GM23248 (cell line): ENCODE measurements at regions of chr19 and their contacts with region 1.

Region 1: DNA sequence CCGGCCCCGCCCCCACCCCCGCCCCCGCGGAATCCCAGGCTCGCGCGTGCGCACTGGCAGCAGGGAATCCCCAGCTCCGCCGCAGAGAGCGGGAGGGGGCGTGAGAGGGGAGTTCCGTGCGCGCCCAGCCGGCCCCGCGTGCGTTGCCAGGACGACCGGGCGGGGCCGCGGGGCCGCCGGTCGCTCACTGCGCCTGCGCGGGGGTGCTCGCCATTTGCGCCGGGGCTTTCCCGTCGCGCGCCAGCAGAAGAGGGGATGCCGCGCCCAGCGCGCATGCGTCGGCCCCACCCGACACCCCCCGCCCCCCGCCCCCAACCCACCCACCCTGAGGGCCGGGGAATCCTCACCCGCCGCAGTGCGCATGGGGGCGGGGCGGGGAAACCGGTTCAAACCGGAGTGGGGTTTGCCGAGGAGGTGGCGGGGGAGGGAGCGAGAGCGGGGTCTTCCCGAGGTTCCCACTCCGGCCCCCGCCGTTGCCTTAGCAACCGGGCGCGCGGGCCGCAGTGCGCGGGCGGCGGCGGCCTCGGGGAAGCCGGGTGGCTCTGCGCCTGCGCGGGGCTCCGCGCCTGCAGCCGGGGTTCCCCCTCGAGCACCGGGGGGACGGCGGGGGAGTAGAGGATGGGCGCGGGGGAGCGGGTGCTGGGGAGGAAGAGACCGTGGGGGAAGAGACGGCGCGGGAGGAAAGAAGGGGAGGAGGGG is 15.1 kb downstream of the CCDC124 start:
- DNase-seq: peak; percentile 98
- H3K4me3 ChIP-seq: peak overlapping the region; percentile 67
- H3K27ac ChIP-seq: no peak overlapping the region
- H3K4me1 ChIP-seq: peaks cover 3% of the 10 kb centered on the region; the same call in 1 of the 2 replicates
- H3K27me3 ChIP-seq: peaks cover 43% of the 10 kb centered on the region

Region 2: DNA sequence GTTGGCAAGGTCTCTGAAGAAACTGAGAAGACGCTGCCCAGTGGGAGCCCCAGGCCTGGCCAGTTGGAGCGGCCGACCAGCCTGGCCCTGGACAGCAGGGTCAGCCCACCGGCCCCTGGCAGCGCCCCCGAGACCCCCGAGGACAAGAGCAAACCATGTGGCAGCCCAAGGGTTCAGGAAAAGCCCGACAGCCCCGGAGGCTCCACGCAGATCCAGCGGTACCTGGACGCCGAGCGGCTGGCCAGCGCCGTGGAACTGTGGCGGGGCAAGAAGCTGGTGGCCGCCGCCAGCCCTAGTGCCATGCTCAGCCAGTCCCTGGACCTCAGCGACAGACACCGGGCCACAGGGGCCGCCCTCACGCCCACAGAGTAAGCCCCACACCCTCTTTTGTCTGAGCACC is 752.9 kb before region 1 on chr19:
- in situ Hi-C with region 1: no loop called
- DNase-seq: no peak
- H3K4me3 ChIP-seq: no peak overlapping the region
- H3K27ac ChIP-seq: no peak overlapping the region
- H3K4me1 ChIP-seq: no peaks in the 10 kb centered on the region
- H3K27me3 ChIP-seq: no peaks in the 10 kb centered on the region

Region 3: GRCh38 chr19:17996826-17997316 is 48.9 kb after region 1 on chr19:
- in situ Hi-C with region 1: loop called (anchors 10 kb)
- DNase-seq: peak; percentile 82
- H3K4me3 ChIP-seq: no peak overlapping the region
- H3K27ac ChIP-seq: no peak overlapping the region
- H3K4me1 ChIP-seq: peaks cover 5% of the 10 kb centered on the region; the same call in 1 of the 2 replicates
- H3K27me3 ChIP-seq: no peaks in the 10 kb centered on the region

Region 4: DNA sequence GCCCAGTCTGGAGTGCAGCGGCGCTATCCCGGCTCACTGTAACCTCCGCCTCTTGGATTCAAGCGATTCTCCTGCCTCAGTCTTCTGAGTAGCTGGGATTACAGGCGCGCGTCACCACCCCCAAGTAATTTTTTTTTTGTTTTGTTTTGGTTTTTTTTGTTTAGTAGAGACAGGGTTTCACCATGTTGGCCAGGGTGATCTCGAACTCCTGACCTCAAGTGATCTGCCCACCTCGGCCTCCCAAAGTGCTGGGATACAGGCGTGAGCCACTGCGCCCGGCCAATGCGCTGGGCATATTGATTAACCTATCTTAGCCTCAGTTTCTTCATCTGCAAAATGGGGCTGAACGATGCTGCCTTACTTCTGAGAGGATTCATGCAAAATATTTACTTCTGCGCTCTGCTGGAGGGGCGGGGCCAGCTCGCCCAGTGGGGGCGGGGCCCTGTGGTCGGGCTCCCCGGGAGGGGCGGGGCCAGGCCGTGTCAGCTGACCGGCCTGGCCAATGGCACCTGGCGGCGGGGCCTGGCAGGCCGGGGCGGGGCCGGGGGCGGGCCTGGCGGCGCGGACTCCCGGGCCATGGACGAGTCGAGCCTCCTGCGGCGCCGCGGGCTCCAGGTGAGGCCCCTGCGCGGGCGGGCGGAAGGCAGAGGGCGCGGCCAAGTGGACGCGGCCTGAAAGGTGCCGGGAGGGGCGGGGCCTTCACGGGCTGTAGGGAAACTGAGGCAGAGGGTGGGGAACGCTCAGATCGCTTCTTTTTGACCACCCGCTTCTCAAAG is 149.4 kb after region 1 on chr19 and contains the start of gene MAST3:
- in situ Hi-C with region 1: no loop called
- DNase-seq: peak; percentile 94
- H3K4me3 ChIP-seq: peak within 1 kb of the TSS; percentile 70
- H3K27ac ChIP-seq: no peak within 1 kb of the TSS
- H3K4me1 ChIP-seq: no peaks in the 10 kb centered on the region; the same call in 1 of the 2 replicates
- H3K27me3 ChIP-seq: no peaks in the 10 kb centered on the region; the same call in 1 of the 2 replicates
- total RNA-seq, gene MAST3: 3.2 and 3.8 TPM in 2 replicates